CD8-positive, alpha-beta T cell (primary cell): ENCODE measurements at regions of chr4 and their contacts with region 1.

Region 1: GRCh38 chr4:47463235-47463956 is at the start of gene COMMD8:
- DNase-seq: peak; percentile 95 to 99 (median 97)
- ATAC-seq: peak; percentile 86
- H3K4me3 ChIP-seq: peak within 1 kb of the TSS; percentile 71 to 85
- H3K4me3 Mint-ChIP-seq: peak within 1 kb of the TSS; percentile 88
- H3K27ac ChIP-seq: peak within 1 kb of the TSS; percentile 73 to 81
- H3K27ac Mint-ChIP-seq: peak within 1 kb of the TSS; percentile 86
- H3K4me1 ChIP-seq: peaks cover 12% of the 10 kb centered on the region
- H3K4me1 Mint-ChIP-seq: peaks cover 43% of the 10 kb centered on the region
- H3K27me3 ChIP-seq: no peaks in the 10 kb centered on the region
- H3K27me3 Mint-ChIP-seq: peaks cover 2% of the 10 kb centered on the region
- CTCF ChIP-seq: no peak
- total RNA-seq, gene COMMD8: 4.6 to 6.3 TPM

Region 2: DNA sequence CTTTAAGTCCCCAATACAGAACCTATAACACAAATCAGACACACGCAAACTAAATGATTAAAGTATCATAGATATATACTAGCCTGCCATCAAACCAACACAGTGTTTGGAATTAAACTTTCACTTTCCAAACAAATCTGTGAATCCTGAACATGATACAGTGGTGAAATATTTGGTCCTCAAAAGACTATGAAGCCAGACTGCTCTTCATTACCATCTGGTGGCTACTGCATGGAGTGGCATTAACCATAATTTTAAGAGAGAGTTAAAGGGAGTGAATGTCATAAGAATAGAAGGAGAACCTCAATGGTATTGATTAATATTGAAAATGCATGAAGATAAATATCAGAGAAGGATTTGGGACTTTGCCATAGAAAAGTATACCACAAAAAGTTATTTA is 460.8 kb before region 1 on chr4:
- CTCF ChIA-PET with region 1: no interaction called
- POLR2A ChIA-PET with region 1: no interaction called
- intact Hi-C with region 1: no loop called
- DNase-seq: no peak
- ATAC-seq: no peak
- H3K4me3 ChIP-seq: no peak overlapping the region
- H3K4me3 Mint-ChIP-seq: no peak overlapping the region
- H3K27ac ChIP-seq: no peak overlapping the region
- H3K27ac Mint-ChIP-seq: no peak overlapping the region
- H3K4me1 ChIP-seq: no peaks in the 10 kb centered on the region
- H3K4me1 Mint-ChIP-seq: no peaks in the 10 kb centered on the region
- H3K27me3 ChIP-seq: no peaks in the 10 kb centered on the region
- H3K27me3 Mint-ChIP-seq: peaks cover 4% of the 10 kb centered on the region
- CTCF ChIP-seq: no peak

Region 3: DNA sequence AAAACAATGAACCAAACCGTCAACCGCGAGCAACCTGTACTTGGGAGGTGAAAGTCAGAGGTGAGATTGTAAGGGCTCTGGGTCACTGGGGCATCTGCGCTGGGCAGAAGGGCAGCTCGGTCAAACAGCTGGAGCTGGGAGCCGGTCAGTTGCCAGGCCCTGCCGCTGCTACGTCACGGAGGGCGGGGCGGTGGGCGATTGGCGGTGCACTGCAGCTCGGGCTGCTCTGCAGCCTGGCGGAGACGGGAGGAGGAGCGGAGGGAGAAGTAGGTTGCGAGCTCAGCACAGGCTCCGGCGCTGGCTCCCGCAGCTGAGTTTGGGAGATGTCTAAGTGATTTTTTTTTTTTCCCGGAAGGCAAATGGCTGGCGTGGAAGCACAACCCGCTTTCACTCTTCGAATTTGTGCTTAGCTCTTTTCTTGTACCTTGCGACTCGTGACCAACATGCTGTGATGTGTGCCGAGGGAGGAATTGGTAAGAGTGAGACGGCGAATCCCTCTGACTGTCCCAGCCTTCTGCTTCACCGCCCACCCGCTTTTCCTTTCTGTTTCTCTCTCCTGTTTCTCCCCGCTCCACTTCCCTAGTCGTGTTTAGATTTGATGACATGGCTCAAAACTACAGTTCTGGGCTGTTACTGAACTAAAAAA is 21.8 kb after region 1 on chr4 and contains the start of gene ATP10D:
- CTCF ChIA-PET with region 1: interaction called, 9 read pairs
- POLR2A ChIA-PET with region 1: interaction called, 26 read pairs
- intact Hi-C with region 1: loop called (anchors 1 kb)
- DNase-seq: peak; percentile 39 to 88 (median 74)
- ATAC-seq: peak; percentile 91
- H3K4me3 ChIP-seq: peak within 1 kb of the TSS; percentile 63 to 85
- H3K4me3 Mint-ChIP-seq: peak within 1 kb of the TSS; percentile 95
- H3K27ac ChIP-seq: peak within 1 kb of the TSS; percentile 68 to 83
- H3K27ac Mint-ChIP-seq: peak within 1 kb of the TSS; percentile 93
- H3K4me1 ChIP-seq: peaks cover 9% of the 10 kb centered on the region
- H3K4me1 Mint-ChIP-seq: peaks cover 30% of the 10 kb centered on the region
- H3K27me3 ChIP-seq: no peaks in the 10 kb centered on the region
- H3K27me3 Mint-ChIP-seq: no peaks in the 10 kb centered on the region
- CTCF ChIP-seq: no peak
- total RNA-seq, gene ATP10D: 2.3 to 2.4 TPM

Region 4: GRCh38 chr4:47510036-47510435 is 46.6 kb after region 1 on chr4:
- CTCF ChIA-PET with region 1: no interaction called
- POLR2A ChIA-PET with region 1: no interaction called
- intact Hi-C with region 1: no loop called
- DNase-seq: no peak
- ATAC-seq: no peak
- H3K4me3 ChIP-seq: no peak overlapping the region
- H3K4me3 Mint-ChIP-seq: no peak overlapping the region
- H3K27ac ChIP-seq: no peak overlapping the region
- H3K27ac Mint-ChIP-seq: no peak overlapping the region
- H3K4me1 ChIP-seq: peaks cover 6% of the 10 kb centered on the region
- H3K4me1 Mint-ChIP-seq: peaks cover 9% of the 10 kb centered on the region
- H3K27me3 ChIP-seq: no peaks in the 10 kb centered on the region
- H3K27me3 Mint-ChIP-seq: no peaks in the 10 kb centered on the region
- CTCF ChIP-seq: no peak

Region 5: GRCh38 chr4:47562297-47562696 is 98.9 kb after region 1 on chr4:
- CTCF ChIA-PET with region 1: interaction called, 19 read pairs
- POLR2A ChIA-PET with region 1: interaction called, 3 read pairs
- intact Hi-C with region 1: loop called (anchors 2 to 5 kb)
- DNase-seq: peak in 2 of 9 experiments; percentile 2 to 3
- ATAC-seq: no peak
- H3K4me3 ChIP-seq: no peak overlapping the region
- H3K4me3 Mint-ChIP-seq: no peak overlapping the region
- H3K27ac ChIP-seq: no peak overlapping the region
- H3K27ac Mint-ChIP-seq: no peak overlapping the region
- H3K4me1 ChIP-seq: no peaks in the 10 kb centered on the region
- H3K4me1 Mint-ChIP-seq: peaks cover 8% of the 10 kb centered on the region
- H3K27me3 ChIP-seq: no peaks in the 10 kb centered on the region
- H3K27me3 Mint-ChIP-seq: no peaks in the 10 kb centered on the region
- CTCF ChIP-seq: no peak

Region 6: GRCh38 chr4:47914220-47914925 is 451.0 kb after region 1 on chr4 and contains the start of gene NFXL1:
- CTCF ChIA-PET with region 1: no interaction called
- POLR2A ChIA-PET with region 1: no interaction called
- intact Hi-C with region 1: loop called (anchors 1 to 2 kb)
- DNase-seq: peak; percentile 90 to 97 (median 96)
- ATAC-seq: peak; percentile 95
- H3K4me3 ChIP-seq: peak within 1 kb of the TSS; percentile 99 to 100
- H3K4me3 Mint-ChIP-seq: peak within 1 kb of the TSS; percentile 99
- H3K27ac ChIP-seq: peak within 1 kb of the TSS; percentile 81 to 86
- H3K27ac Mint-ChIP-seq: peak within 1 kb of the TSS; percentile 97
- H3K4me1 ChIP-seq: peaks cover 22% of the 10 kb centered on the region
- H3K4me1 Mint-ChIP-seq: peaks cover 32% of the 10 kb centered on the region
- H3K27me3 ChIP-seq: no peaks in the 10 kb centered on the region
- H3K27me3 Mint-ChIP-seq: no peaks in the 10 kb centered on the region
- CTCF ChIP-seq: no peak
- total RNA-seq, gene NFXL1: 6.5 to 8.1 TPM

Region 7: DNA sequence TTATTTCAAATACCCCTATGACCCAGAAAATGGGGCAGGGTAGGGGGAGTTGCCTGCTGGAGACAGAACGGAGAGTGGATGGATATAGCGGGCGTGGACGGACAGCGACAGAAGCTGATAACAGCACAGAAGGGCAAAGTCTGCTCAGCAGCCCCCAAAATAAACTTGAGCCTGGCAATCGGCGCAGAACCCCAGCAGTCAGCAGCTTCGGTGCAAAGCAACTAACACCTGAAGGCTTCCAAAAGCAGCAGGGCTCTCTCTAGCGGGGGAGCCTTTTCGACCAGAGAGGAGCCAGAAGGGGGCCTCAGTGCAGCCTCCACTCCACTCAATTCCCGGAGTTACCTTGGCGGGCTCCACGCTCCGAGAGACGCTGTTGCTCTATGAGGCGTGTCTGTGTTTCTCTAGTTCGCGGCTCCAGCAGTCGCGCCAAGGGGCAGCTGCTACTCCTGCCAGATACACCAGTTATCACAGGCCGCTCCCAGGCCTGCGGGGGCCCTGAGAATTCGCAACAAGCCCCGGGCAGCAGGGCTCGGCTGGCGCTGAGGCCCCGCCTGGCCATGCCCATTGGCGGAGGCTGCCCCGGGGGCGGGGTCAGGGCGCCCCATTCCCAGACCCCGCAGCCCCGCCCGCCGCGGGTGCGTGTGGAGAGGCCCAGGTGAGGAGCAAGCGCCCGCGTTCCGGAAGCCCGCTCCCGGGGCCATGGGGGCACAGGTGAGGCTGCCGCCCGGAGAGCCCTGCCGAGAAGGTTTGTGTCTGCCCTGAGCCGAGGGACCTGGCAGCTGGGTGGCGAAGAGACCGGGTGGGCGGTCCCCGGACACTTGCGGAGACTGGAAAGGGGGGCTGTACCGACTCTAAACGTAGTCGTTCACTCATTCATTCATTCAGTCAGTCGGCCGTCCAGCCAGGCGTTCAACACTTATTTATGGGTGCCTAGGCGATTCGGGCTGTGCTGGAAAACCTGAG is 553.0 kb after region 1 on chr4 and contains the starts of genes CNGA1 and NIPAL1:
- CTCF ChIA-PET with region 1: no interaction called
- POLR2A ChIA-PET with region 1: no interaction called
- intact Hi-C with region 1: loop called in 1 of 2 experiments (anchors 10 kb)
- DNase-seq: peak; percentile 23 to 81 (median 69)
- ATAC-seq: peak; percentile 95
- H3K4me3 ChIP-seq: peak within 1 kb of the TSS; percentile 63 to 68
- H3K4me3 Mint-ChIP-seq: peak within 1 kb of the TSS; percentile 87
- H3K27ac ChIP-seq: no peak within 1 kb of the TSS
- H3K27ac Mint-ChIP-seq: peak within 1 kb of the TSS; percentile 3
- H3K4me1 ChIP-seq: peaks cover 12% of the 10 kb centered on the region
- H3K4me1 Mint-ChIP-seq: peaks cover 9% of the 10 kb centered on the region
- H3K27me3 ChIP-seq: no peaks in the 10 kb centered on the region
- H3K27me3 Mint-ChIP-seq: peaks cover 9% of the 10 kb centered on the region
- CTCF ChIP-seq: no peak
- total RNA-seq, gene CNGA1: not detected
- total RNA-seq, gene NIPAL1: 0.64 to 1.3 TPM

Region 8: GRCh38 chr4:48269861-48270522 is 806.6 kb after region 1 on chr4:
- CTCF ChIA-PET with region 1: no interaction called
- POLR2A ChIA-PET with region 1: no interaction called
- intact Hi-C with region 1: loop called in 1 of 2 experiments (anchors 2 kb)
- DNase-seq: peak; percentile 74 to 89 (median 85)
- ATAC-seq: peak; percentile 88
- H3K4me3 ChIP-seq: peak overlapping the region; percentile 68 to 98
- H3K4me3 Mint-ChIP-seq: peak overlapping the region; percentile 96
- H3K27ac ChIP-seq: peak overlapping the region; percentile 47 to 60
- H3K27ac Mint-ChIP-seq: peak overlapping the region; percentile 80
- H3K4me1 ChIP-seq: peaks cover 12% of the 10 kb centered on the region
- H3K4me1 Mint-ChIP-seq: peaks cover 18% of the 10 kb centered on the region
- H3K27me3 ChIP-seq: no peaks in the 10 kb centered on the region
- H3K27me3 Mint-ChIP-seq: no peaks in the 10 kb centered on the region
- CTCF ChIP-seq: no peak

Region 9: GRCh38 chr4:48906206-48907173 is 1443.1 kb after region 1 on chr4 and contains the start of gene OCIAD2:
- CTCF ChIA-PET with region 1: no interaction called
- POLR2A ChIA-PET with region 1: no interaction called
- intact Hi-C with region 1: loop called in 1 of 2 experiments (anchors 10 kb)
- DNase-seq: peak; percentile 70 to 92 (median 89)
- ATAC-seq: peak; percentile 97
- H3K4me3 ChIP-seq: peak within 1 kb of the TSS; percentile 73 to 82
- H3K4me3 Mint-ChIP-seq: peak within 1 kb of the TSS; percentile 98
- H3K27ac ChIP-seq: peak within 1 kb of the TSS; percentile 64 to 71
- H3K27ac Mint-ChIP-seq: peak within 1 kb of the TSS; percentile 98
- H3K4me1 ChIP-seq: peaks cover 29% of the 10 kb centered on the region
- H3K4me1 Mint-ChIP-seq: peaks cover 49% of the 10 kb centered on the region
- H3K27me3 ChIP-seq: no peaks in the 10 kb centered on the region
- H3K27me3 Mint-ChIP-seq: no peaks in the 10 kb centered on the region
- CTCF ChIP-seq: peak; percentile 36
- total RNA-seq, gene OCIAD2: 70.6 to 72.1 TPM